Natural killer cell (primary cell): ENCODE measurements at regions of chr6 and their contacts with region 1.

Region 1: DNA sequence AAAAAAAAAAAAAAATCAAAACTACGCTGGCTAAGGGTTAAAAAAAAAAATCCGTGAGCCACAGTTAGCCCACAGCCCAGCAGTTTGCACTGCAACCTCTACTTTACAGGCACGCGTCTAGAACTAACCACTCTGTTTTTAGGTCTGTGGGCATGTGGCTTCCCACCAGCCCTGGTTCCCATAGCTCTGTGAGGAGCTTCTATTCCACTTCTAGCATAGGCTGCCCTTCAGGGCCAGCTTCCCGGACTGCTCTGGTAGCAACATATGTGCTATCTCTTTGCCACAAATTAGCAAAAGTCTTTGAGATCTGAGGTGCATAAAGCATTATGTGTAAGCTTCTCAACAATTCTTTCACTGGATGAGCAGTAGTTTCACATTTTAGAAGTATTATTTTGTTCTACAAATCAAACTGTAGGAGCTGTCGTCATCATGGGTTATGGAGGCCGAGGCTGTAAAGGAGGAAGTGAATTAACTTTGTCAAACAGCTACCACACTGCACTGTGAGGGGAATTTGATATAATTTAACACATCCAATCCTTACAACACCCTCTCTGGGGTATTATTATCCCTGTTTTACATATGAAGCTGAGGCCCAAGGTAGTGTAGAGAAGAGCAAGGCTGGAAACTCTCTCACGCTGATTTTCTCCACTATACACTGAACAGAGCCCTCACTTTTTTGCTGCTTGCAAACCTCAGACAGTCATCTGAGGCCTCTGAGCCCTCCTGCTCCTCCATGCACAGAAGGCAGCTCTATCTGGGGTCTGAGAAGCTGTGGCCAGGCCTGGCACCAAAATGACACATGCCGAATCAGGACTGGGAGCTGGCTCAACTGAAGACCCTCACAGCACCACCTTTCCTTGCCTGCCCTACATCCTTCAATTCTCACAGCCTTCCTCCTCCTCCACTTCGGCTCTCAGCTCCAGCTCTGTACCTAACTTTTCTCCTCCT is 35.4 kb downstream of the MAN1A1 start:
- DNase-seq: peak; percentile 63 to 76
- ATAC-seq: peak; percentile 66 to 82 (median 81)
- H3K4me3 ChIP-seq: no peak overlapping the region
- H3K4me3 Mint-ChIP-seq: peak overlapping the region; percentile 84
- H3K27ac ChIP-seq: peak overlapping the region; percentile 98
- H3K27ac Mint-ChIP-seq: peak overlapping the region; percentile 95 to 98
- H3K4me1 ChIP-seq: peaks cover 45% of the 10 kb centered on the region
- H3K4me1 Mint-ChIP-seq: peaks cover 66 to 76% of the 10 kb centered on the region in 2 donors
- H3K27me3 ChIP-seq: no peaks in the 10 kb centered on the region
- H3K27me3 Mint-ChIP-seq: no peaks in the 10 kb centered on the region
- CTCF ChIP-seq: no peak

Region 2: DNA sequence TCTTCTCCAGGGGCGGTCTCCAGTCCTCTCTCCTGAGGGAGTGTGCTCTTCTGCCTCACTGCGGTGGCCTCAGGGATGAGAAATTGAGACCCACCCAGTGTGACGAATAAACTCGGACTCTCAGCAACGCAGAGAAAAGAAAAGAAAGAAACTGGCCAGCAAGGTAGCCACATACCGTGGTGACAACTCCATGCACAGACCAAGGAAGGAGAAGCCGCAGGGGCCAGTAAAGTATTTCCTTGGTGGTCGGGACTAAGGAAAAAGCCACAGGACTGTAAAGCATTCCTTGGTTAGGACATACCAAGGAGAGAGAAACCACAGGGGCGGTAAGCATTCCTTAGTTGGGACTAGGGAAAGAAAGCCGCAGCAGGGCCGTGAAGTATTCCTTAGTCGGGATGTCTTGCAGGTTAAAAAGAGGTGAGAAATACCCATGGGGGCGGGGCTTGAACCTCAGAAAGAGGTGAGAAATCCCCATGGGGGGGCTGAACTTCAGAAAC is 1698.3 kb before region 1 on chr6:
- intact Hi-C with region 1: loop called (anchors 10 kb)
- DNase-seq: no peak
- ATAC-seq: no peak
- H3K4me3 ChIP-seq: no peak overlapping the region
- H3K4me3 Mint-ChIP-seq: peak overlapping the region; percentile 64
- H3K27ac ChIP-seq: peak overlapping the region; percentile 81
- H3K27ac Mint-ChIP-seq: peak overlapping the region; percentile 93 to 95
- H3K4me1 ChIP-seq: peaks cover 29% of the 10 kb centered on the region
- H3K4me1 Mint-ChIP-seq: peaks cover 60 to 65% of the 10 kb centered on the region in 2 donors
- H3K27me3 ChIP-seq: no peaks in the 10 kb centered on the region
- H3K27me3 Mint-ChIP-seq: no peaks in the 10 kb centered on the region
- CTCF ChIP-seq: no peak

Region 3: DNA sequence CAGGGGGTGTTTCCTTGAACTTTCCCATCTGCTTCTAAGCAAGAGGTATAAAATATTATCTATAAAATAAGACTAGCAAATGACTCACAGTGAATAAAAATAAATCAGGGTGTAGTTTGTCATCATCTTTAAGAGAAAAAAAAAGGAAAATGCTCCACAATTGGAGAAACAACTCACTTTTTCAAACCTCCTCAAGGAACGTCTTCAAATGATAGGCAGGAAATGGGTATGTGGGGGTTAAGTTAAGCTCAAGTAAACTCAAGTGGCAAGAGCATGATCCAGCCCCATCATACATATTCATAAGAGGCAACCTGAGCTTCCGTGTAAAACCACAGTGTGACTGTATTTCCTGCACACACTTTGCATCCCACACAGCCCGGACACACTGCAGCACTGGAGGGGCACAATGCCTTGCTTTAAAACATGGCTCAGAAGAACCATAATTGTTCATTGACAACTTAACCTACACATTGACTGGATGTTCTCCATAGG is 604.3 kb before region 1 on chr6:
- intact Hi-C with region 1: loop called (anchors 5 kb)
- DNase-seq: peak; percentile 59 to 91
- ATAC-seq: peak; percentile 83 to 92 (median 91)
- H3K4me3 ChIP-seq: peak overlapping the region; percentile 78
- H3K4me3 Mint-ChIP-seq: peak overlapping the region; percentile 100
- H3K27ac ChIP-seq: peak overlapping the region; percentile 80
- H3K27ac Mint-ChIP-seq: peak overlapping the region; percentile 88 to 91
- H3K4me1 ChIP-seq: peaks cover 38% of the 10 kb centered on the region
- H3K4me1 Mint-ChIP-seq: peaks cover 73% of the 10 kb centered on the region in 2 donors
- H3K27me3 ChIP-seq: no peaks in the 10 kb centered on the region
- H3K27me3 Mint-ChIP-seq: no peaks in the 10 kb centered on the region
- CTCF ChIP-seq: no peak

Region 4: DNA sequence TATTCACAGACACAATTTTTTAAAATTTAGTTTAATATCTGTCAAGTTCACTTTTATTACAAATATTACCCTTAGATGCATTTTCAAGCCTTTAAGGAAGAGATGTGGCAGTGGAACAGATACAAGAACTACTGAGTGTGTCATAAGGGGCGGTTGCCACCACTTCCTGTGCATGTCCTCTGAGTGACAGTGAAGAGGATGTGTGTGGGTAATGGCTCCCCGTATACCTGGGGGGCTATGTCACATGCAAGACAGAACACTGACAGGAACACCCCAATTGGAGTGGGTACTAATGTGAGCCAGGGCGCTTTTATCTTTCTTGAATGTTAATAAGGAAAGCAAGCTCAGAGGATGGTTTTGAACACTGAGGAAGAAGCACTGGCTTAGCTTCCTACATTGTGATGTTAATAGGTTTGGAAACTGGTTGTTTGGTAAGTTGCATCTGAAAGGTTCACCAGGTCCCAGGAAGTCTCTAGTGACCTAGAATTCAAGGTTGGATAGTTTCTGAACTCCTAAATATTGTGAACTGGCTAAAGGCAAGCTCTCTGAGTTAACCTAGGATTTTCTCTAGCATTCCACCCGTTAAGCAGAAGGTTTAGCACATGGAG is 503.7 kb before region 1 on chr6:
- intact Hi-C with region 1: loop called (anchors 5 kb)
- DNase-seq: peak; percentile 65 to 84
- ATAC-seq: peak; percentile 83 to 94 (median 86)
- H3K4me3 ChIP-seq: no peak overlapping the region
- H3K4me3 Mint-ChIP-seq: peak overlapping the region; percentile 90
- H3K27ac ChIP-seq: peak overlapping the region; percentile 92
- H3K27ac Mint-ChIP-seq: peak overlapping the region; percentile 96 to 99
- H3K4me1 ChIP-seq: peaks cover 22% of the 10 kb centered on the region
- H3K4me1 Mint-ChIP-seq: peaks cover 54 to 65% of the 10 kb centered on the region in 2 donors
- H3K27me3 ChIP-seq: no peaks in the 10 kb centered on the region
- H3K27me3 Mint-ChIP-seq: no peaks in the 10 kb centered on the region
- CTCF ChIP-seq: no peak

Region 5: DNA sequence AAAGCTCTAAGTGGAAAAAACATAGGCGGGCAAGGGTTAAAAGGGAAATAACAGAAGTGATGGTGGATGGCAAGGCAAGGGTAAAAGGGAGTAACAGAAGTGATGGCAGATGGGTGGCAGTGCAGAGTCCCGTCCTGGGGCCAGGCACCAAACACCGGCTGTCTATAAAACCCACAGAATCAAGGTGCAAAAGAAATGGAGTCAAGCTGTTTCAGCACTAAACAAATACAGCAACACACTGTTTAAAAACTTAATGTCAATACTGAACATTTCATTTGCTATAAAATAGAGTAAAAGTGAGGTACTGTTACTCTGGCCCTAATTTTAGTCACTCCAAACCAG is 52.3 kb before region 1 on chr6:
- intact Hi-C with region 1: loop called (anchors 5 kb)
- DNase-seq: no peak
- ATAC-seq: peak; percentile 56 to 90 (median 73)
- H3K4me3 ChIP-seq: no peak overlapping the region
- H3K4me3 Mint-ChIP-seq: no peak overlapping the region
- H3K27ac ChIP-seq: no peak overlapping the region
- H3K27ac Mint-ChIP-seq: peak overlapping the region; percentile 51 to 58
- H3K4me1 ChIP-seq: no peaks in the 10 kb centered on the region
- H3K4me1 Mint-ChIP-seq: peaks cover 23 to 24% of the 10 kb centered on the region in 2 donors
- H3K27me3 ChIP-seq: no peaks in the 10 kb centered on the region
- H3K27me3 Mint-ChIP-seq: no peaks in the 10 kb centered on the region
- CTCF ChIP-seq: no peak

Region 6: DNA sequence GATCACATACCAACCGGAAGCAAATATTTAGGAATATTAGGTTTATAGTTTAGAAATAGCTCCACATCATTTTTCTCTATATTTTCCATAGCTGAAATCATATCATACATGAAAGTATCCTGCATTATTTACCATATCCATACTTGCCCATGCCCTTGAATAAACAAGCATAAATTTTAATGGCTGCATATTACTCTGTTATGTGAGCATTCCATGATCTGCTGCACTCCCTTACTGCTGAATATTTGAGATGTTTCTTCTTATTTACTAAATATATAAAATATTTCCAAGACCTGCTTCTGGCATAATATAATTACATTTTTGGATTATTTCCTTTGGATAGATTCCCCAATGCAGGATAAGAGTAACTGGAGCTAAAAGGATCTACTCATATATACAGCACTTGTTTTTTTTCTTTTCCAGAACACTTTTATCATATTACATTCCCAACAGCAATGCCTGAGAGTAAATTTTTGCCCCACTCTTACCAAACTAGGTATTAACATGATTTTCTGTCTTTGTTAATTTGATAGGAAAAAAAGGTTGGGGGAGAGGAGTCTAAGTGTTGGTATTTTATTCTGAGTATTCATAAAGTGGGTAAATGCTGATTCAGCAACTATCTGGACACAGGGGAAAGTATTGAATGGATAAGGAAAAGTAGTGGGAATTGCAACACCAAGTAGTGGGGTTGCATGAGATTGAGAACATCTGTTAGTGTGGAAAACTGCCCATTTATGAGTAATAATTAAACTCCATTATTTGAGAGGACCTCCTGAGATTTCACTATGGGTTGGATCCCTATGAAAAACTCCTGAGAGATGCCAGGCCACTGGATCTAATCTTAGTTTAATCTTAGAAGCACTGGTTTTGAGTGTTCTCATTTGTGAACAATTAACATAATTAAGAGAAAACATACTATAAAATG is 40.7 kb before region 1 on chr6:
- intact Hi-C with region 1: no loop called
- DNase-seq: no peak
- ATAC-seq: no peak
- H3K4me3 ChIP-seq: no peak overlapping the region
- H3K4me3 Mint-ChIP-seq: no peak overlapping the region
- H3K27ac ChIP-seq: no peak overlapping the region
- H3K27ac Mint-ChIP-seq: no peak overlapping the region
- H3K4me1 ChIP-seq: peaks cover 2% of the 10 kb centered on the region
- H3K4me1 Mint-ChIP-seq: peaks cover 2 to 16% of the 10 kb centered on the region in 2 donors
- H3K27me3 ChIP-seq: no peaks in the 10 kb centered on the region
- H3K27me3 Mint-ChIP-seq: no peaks in the 10 kb centered on the region
- CTCF ChIP-seq: no peak

Region 7: DNA sequence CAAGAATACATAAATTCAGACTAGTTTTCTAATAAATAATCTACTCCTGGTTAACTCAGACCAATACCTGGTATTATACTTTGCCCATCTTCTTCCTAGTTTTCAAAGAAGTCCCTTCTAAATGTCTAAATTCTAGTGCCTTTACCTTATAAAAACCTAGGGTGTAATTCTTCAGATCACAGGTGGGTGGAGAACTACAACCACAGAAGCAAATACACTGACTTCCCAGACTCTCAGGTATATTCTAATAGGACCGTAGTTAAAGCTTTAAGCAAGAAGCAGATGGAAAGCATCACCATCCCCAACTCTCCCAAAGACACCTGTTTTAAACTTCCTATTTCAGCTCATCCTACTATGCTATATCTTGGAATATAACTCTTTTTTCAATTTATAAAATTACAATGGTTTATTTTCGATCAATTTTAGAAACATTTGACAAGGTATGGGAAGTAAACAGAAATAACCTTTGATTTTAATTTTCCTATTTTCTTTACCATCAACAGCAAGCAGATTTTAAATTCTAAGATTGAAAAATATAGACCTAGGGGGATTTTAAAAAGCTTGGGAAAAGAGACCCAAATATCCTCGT is 19.6 kb after region 1 on chr6:
- intact Hi-C with region 1: loop called (anchors 2 kb)
- DNase-seq: peak in 1 of 2 donors; percentile 66
- ATAC-seq: peak in 2 of 3 donors; percentile 50 to 57
- H3K4me3 ChIP-seq: no peak overlapping the region
- H3K4me3 Mint-ChIP-seq: no peak overlapping the region
- H3K27ac ChIP-seq: no peak overlapping the region
- H3K27ac Mint-ChIP-seq: peak overlapping the region; percentile 6 to 13
- H3K4me1 ChIP-seq: peaks cover 3% of the 10 kb centered on the region
- H3K4me1 Mint-ChIP-seq: peaks cover 66 to 76% of the 10 kb centered on the region in 2 donors
- H3K27me3 ChIP-seq: no peaks in the 10 kb centered on the region
- H3K27me3 Mint-ChIP-seq: no peaks in the 10 kb centered on the region
- CTCF ChIP-seq: peak; percentile 38

Region 8: DNA sequence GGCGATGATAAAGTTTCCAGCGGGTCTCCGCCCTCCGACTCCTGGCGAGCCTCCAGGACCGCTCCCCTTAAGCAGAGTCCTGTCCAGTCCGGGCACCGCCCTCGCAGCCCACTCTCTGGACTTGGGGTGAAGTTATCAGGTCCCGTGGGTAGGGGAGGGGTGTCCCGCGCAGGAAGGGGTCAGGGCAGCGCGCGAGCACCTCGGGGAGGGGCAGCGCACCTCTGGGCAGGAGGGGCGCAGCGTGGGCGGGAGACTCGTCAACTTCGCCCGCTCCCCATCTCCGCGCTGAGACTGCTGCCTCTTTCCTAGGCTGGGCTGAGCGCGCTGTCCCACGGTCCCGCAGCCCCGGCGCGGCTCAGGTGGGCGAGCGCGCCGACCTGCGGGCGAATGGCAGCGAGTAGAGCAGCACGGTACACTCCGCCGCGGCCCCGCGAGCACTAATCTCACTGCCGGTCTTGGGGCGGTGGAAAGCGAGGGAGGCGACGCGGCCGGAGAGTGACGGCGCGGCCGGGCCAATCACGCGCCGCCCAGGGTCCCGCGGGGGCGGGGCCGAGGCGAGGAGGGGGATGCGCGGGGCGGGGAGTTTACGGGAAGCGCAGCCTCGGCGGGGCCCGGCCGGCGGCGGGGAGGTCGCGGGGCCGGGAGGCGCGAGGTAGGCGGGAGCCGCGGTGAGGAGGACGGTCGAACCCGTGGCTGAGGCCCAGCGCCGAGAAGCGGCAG is 35.3 kb after region 1 on chr6 and contains the start of gene MAN1A1:
- intact Hi-C with region 1: loop called (anchors 1 kb)
- DNase-seq: peak; percentile 93 to 94
- ATAC-seq: peak; percentile 85 to 96 (median 90)
- H3K4me3 ChIP-seq: peak within 1 kb of the TSS; percentile 80
- H3K4me3 Mint-ChIP-seq: peak within 1 kb of the TSS; percentile 93
- H3K27ac ChIP-seq: peak within 1 kb of the TSS; percentile 91
- H3K27ac Mint-ChIP-seq: peak within 1 kb of the TSS; percentile 88 to 94
- H3K4me1 ChIP-seq: peaks cover 12% of the 10 kb centered on the region
- H3K4me1 Mint-ChIP-seq: peaks cover 46 to 47% of the 10 kb centered on the region in 2 donors
- H3K27me3 ChIP-seq: no peaks in the 10 kb centered on the region
- H3K27me3 Mint-ChIP-seq: no peaks in the 10 kb centered on the region
- CTCF ChIP-seq: no peak
- total RNA-seq, gene MAN1A1: 45.6 to 54.6 (median 53.6) TPM